ENCODE measurements at regions of chr10 and their contacts with region 1.

Region 1: DNA sequence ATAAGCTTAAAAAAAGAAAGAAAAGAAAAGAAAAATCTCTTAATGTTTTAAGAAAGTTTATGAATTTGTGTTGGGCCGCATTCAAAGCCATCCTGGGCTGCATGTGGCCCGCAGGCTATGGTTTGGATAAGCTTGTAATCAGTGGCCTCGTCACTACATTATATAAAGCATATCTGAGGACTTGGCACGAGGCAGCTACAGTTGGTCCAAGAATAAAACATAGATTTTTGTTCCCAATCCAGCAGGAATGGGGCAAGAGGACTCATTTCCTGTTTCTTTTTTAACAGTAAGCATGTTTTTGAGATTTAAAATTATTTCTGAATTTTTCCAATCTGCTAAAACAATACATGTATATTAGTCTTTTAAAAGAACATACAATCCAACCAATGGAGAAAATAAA is 28.6 kb downstream of the MCM10 start:
- DNase-seq: no peak
- H3K4me3 ChIP-seq: no peak overlapping the region
- H3K27ac ChIP-seq: no peak overlapping the region
- H3K4me1 ChIP-seq: no peaks in the 10 kb centered on the region
- H3K27me3 ChIP-seq: no peaks in the 10 kb centered on the region
- CTCF ChIP-seq: no peak
- POLR2A ChIP-seq: no peak

Region 2: DNA sequence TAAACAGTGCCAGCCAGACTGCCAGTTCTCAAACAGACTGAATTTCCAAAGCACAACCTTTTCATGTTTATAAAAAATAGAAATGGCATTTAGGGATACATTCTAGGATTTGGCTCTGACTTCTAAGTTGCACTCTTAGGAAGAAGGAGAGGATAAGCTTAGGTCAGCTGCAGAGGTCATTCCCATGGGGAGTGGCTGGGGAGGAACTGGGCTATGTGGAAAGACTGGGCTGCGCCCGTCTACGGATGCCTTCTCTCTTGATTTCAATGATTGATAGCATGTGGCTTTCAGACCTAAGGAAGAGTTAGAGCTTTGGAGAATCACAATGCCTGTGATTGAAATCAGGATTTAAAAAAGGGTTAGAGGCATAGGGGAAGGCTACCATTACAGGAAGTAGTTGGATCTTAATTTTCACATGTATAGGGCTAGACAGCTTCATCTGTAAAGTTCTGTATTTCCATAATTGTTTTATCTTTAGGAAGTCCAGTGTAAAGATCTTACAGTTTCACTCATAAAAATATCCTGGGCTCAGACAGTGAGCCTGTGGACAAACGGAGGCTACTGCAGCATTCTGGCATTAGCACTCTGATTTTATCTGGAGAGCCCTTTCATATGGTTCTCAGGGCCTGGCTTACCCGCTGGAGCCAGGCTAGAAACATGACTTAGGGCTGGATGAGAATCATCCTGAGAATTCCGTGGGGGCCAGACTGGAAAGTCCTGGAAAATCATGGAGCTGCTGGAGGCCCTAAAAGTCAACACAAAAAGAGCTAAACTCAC is 1023.8 kb before region 1 on chr10:
- CTCF ChIA-PET with region 1: no interaction called
- POLR2A ChIA-PET with region 1: no interaction called
- dilution Hi-C with region 1: no loop called
- intact Hi-C with region 1: no loop called
- DNase-seq: no peak
- H3K4me3 ChIP-seq: no peak overlapping the region
- H3K27ac ChIP-seq: no peak overlapping the region
- H3K4me1 ChIP-seq: no peaks in the 10 kb centered on the region
- H3K27me3 ChIP-seq: no peaks in the 10 kb centered on the region
- CTCF ChIP-seq: no peak
- POLR2A ChIP-seq: no peak

Region 3: GRCh38 chr10:12322583-12323131 is 867.3 kb before region 1 on chr10:
- CTCF ChIA-PET with region 1: no interaction called
- POLR2A ChIA-PET with region 1: no interaction called
- dilution Hi-C with region 1: no loop called
- intact Hi-C with region 1: no loop called
- DNase-seq: no peak
- H3K4me3 ChIP-seq: no peak overlapping the region
- H3K27ac ChIP-seq: no peak overlapping the region
- H3K4me1 ChIP-seq: no peaks in the 10 kb centered on the region
- H3K27me3 ChIP-seq: no peaks in the 10 kb centered on the region
- CTCF ChIP-seq: no peak
- POLR2A ChIP-seq: no peak

Region 4: DNA sequence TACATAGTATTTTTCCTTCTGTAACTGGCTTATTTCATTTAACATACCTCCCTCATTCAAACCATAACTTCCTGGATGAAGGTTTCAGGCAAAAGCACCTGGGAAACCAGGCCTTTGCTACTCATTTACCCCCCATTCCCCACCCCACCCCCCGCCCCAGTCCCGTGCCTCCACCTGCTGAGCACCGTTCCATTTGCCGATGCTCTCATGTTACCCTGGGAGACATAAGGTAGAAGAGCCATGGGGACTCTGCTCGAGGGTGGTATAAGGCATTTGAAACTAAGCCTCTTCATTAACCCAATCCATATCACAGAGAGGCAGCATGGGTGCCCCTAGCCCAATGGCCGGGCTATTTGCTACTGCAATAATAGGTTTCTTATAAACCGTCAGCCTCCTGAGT is 50.8 kb before region 1 on chr10:
- CTCF ChIA-PET with region 1: no interaction called
- POLR2A ChIA-PET with region 1: no interaction called
- dilution Hi-C with region 1: no loop called
- intact Hi-C with region 1: no loop called
- DNase-seq: no peak
- H3K4me3 ChIP-seq: no peak overlapping the region
- H3K27ac ChIP-seq: no peak overlapping the region
- H3K4me1 ChIP-seq: no peaks in the 10 kb centered on the region
- H3K27me3 ChIP-seq: no peaks in the 10 kb centered on the region
- CTCF ChIP-seq: no peak
- POLR2A ChIP-seq: no peak

Region 5: DNA sequence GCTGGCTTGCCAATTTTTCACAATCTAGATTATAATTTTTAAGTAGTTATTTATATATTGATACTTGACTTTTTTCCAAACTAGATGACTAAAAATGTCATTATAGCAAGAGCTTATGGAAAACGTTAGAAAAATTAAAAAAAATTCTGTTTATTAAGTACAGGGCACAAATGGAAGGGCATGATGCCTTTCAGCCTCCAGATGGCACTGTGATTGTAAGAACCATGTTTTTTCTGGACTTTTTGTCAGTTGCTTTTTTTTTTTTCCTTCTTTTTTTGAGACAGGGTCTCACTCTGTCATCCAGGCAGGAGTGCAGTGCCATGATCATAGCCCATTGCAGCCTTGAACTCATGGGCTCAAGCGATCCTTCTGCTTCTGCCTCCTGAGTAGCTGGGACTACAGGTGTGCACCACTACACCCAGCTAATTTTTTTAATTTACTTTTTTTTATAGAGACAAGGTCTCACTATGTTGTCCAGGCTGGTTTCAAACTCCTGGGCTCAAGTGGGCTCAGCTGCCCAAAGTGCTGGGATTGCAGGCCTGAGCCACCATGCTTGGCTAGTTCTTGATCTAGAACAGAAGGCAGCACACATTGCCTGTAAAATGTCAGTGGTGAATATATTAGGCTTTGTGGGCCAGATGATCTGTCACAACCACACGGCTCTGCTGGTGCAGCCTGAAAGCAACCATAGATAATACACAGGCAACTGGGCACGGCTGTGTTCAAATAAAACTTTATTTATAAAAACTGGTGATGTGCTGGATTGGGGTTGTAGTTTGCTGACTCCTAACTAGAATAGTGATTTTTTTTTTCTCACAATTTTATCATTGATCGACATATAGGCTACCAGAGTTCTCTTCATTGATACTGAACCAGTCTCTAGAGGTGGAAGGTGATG is 16.8 kb after region 1 on chr10:
- CTCF ChIA-PET with region 1: interaction called, 10 read pairs
- POLR2A ChIA-PET with region 1: no interaction called
- dilution Hi-C with region 1: no loop called
- intact Hi-C with region 1: no loop called
- DNase-seq: peak; percentile 49
- H3K4me3 ChIP-seq: no peak overlapping the region
- H3K27ac ChIP-seq: no peak overlapping the region
- H3K4me1 ChIP-seq: no peaks in the 10 kb centered on the region
- H3K27me3 ChIP-seq: no peaks in the 10 kb centered on the region
- CTCF ChIP-seq: peak; percentile 31 to 49
- POLR2A ChIP-seq: no peak

Region 6: DNA sequence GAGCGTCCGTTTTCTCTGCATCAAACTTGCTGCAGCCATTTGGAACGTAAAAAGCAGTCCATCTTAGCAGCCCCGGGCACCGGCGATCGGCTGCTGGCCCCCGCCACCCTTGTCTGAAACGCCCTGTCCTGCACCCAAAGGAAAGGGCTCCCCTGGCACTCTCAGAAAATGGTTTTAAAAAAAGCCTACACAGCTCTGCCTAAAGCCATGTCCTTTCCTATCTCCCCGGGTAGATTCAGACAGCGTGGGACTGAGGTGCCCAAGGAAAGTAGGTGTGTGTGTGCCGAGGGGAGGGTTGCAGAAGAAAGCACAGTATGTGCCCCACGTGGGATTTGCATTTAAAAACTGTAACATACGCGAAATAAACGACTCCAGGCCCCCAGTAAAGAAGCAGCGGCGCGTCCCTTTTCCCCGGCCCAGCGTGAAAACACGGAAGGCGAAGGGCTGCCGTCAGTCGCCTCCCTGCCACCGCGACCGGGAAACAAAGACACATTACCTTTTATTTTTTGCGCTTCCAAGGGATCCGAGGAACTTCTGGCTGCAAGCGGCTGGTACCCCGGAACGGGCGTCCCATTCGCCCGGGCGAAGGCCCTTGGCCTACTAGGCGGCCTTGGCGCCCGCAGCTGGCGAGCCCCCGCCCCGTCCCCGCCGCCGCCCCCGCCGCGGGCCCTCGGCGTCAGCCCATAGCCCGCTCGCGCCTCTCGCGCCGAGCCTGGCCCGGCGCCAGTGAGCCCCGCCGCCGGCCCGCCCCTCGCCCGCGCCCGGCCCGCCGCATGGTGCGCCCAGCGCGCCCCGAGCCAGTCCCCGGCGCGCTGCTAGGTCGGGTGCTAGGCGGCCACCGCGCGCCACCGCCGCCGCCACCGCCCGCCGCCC is 701.4 kb after region 1 on chr10:
- CTCF ChIA-PET with region 1: no interaction called
- POLR2A ChIA-PET with region 1: no interaction called
- dilution Hi-C with region 1: no loop called
- intact Hi-C with region 1: no loop called
- DNase-seq: peak; percentile 56
- H3K4me3 ChIP-seq: peak overlapping the region; percentile 74 to 88 (median 78)
- H3K27ac ChIP-seq: peak overlapping the region; percentile 93
- H3K4me1 ChIP-seq: peaks cover 60% of the 10 kb centered on the region
- H3K27me3 ChIP-seq: no peaks in the 10 kb centered on the region
- CTCF ChIP-seq: no peak
- POLR2A ChIP-seq: peak; percentile 24

Measured in endothelial cell of umbilical vein (primary cell).